Transverse colon (tissue), 4 donors: ENCODE measurements at regions of chr5 and their contacts with region 1.

Region 1: GRCh38 chr5:149960272-149961185 is at the start of gene SLC26A2:
- DNase-seq: peak; percentile 98
- H3K4me3 ChIP-seq: peak within 1 kb of the TSS; percentile 42 to 92 (median 64)
- H3K27ac ChIP-seq: peak within 1 kb of the TSS; percentile 90 to 95 (median 94)
- H3K4me1 ChIP-seq: peaks cover 0 to 39% (median 21%) of the 10 kb centered on the region in 4 donors
- H3K27me3 ChIP-seq: no peaks in the 10 kb centered on the region
- CTCF ChIP-seq: peak in 2 of 5 experiments; percentile 21 to 22
- EP300 ChIP-seq: no peak
- POLR2A ChIP-seq: peak; percentile 97
- total RNA-seq, gene SLC26A2: 233 to 1,489 (median 1,023) TPM

Region 2: DNA sequence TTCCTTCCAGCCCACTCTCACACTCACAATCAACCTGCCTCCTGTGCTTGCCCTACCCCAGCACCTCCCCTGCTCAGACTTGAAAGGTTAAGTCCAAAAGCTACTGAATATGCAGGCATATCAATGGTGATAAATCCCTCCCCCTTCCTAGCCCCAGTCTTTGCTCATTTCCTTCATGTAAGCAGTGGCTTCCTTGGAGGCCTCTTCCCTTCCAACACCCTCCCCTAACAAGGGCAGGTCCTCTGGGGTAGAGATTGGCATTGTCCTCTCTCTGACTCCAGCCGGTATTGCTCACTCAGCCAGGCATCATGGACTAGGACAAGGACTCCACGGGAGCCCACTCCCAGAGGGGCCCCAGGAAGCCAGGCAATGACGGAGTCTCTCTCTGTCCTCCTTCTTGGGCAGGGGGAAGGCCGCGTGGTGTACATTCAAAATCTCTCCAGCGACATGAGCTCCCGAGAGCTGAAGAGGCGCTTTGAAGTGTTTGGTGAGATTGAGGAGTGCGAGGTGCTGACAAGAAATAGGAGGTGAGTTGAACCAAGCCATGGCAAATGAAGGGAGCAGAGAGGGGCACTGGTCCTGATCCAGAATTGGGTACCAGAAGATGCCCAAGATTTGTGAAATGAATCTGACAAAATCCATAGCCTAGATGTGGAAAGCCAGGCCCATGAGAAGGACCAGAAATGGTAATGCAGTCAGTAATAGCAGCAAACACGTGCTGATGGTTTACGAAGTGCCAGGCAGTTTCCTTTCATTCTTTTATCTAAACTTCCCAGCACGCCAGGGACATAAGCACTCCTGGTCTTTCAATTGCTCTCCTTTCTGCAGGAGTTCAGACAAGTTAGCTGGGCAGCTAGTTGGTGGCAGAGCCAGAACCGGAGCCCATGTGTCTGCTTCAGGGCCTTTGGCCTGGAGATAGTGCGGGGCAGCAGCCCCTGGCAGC is 118.4 kb before region 1 on chr5:
- in situ Hi-C with region 1: no loop called
- intact Hi-C with region 1: no loop called
- DNase-seq: no peak
- H3K4me3 ChIP-seq: no peak overlapping the region
- H3K27ac ChIP-seq: no peak overlapping the region
- H3K4me1 ChIP-seq: peaks cover 0 to 13% (median 6%) of the 10 kb centered on the region in 4 donors
- H3K27me3 ChIP-seq: no peaks in the 10 kb centered on the region
- CTCF ChIP-seq: no peak
- EP300 ChIP-seq: no peak
- POLR2A ChIP-seq: no peak

Region 3: DNA sequence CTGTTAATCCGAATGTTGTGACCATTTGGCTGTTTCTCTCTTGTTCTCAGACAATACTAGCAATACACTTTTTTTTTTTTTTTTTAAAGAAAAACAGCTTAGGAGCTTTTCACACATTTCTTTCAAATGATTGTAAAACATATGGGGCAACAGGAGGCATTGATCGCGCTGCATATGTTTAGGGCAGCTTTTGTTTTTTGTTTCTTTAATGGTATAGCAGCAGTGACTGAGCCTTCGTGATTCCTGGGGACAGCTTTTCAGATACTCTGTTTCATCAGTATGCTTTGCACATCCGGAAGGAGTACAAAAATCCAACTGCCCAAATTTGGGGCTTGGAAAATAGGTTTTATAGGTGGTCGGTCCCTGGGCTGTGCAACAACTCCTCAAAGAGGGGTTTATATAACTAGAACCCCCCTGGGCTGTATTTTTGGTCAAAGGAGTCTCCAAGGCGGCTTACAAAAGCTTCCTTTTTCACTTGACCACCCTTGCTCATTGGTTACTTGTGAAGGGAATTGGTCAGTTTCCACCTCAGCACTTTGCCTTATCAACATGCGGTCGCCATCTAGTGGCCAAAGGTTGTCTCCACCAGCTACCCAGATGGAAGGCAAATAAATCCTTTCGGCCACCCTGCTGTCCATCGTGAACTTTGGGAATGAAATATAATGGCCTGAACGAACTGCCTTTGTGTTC is 107.7 kb before region 1 on chr5:
- in situ Hi-C with region 1: loop called in 2 of 4 experiments (anchors 10 to 25 kb)
- intact Hi-C with region 1: no loop called
- DNase-seq: peak; percentile 83
- H3K4me3 ChIP-seq: no peak overlapping the region
- H3K27ac ChIP-seq: peak overlapping the region; percentile 7 to 56 (median 30)
- H3K4me1 ChIP-seq: peaks cover 22 to 61% (median 39%) of the 10 kb centered on the region in 4 donors
- H3K27me3 ChIP-seq: no peaks in the 10 kb centered on the region
- CTCF ChIP-seq: peak; percentile 83 to 89 (median 86)
- EP300 ChIP-seq: no peak
- POLR2A ChIP-seq: no peak

Region 4: GRCh38 chr5:151384106-151384505 is 1423.6 kb after region 1 on chr5:
- in situ Hi-C with region 1: no loop called
- intact Hi-C with region 1: no loop called
- DNase-seq: no peak
- H3K4me3 ChIP-seq: no peak overlapping the region
- H3K27ac ChIP-seq: no peak overlapping the region
- H3K4me1 ChIP-seq: no peaks in the 10 kb centered on the region
- H3K27me3 ChIP-seq: no peaks in the 10 kb centered on the region
- CTCF ChIP-seq: no peak
- EP300 ChIP-seq: no peak
- POLR2A ChIP-seq: no peak